ENCODE measurements at regions of chr12 and their contacts with region 1.

Region 1: GRCh38 chr12:96061864-96062453 is 26.6 kb upstream of the LTA4H start:
- DNase-seq: peak in 8 of 10 donors; percentile 23 to 92 (median 65)

Region 2: DNA sequence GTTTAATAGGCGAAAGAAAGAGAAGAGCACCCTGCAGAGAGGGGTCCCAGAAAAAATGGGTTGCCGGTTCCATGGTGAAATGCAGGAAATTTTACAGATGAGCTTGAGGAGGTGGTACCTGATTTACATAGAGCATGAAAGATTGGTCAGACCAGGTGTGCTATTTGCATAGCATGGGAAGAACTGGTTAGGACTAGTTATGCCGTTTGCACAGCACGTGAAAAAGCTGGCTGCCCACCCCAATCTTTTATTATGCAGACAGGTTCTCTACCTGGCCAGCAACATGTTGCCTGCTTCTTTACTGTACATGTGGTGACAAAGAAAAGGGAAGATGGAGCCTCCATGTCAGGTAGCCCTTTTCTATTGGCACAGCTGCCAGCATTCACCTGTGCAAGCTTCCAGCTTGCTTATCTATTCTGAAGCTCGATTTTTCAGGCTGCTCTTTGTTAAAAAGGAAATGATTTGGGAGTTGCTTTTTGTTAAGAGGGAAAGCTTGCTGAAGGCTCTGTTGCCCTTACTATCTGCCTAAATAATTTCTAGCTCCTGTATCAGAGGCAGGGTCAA is 69.3 kb after region 1 on chr12:
- intact Hi-C with region 1: loop called (anchors 2 kb)
- DNase-seq: no peak

Region 3: GRCh38 chr12:96219698-96220206 is 157.8 kb after region 1 on chr12:
- intact Hi-C with region 1: loop called (anchors 1 kb)
- DNase-seq: no peak

Region 4: DNA sequence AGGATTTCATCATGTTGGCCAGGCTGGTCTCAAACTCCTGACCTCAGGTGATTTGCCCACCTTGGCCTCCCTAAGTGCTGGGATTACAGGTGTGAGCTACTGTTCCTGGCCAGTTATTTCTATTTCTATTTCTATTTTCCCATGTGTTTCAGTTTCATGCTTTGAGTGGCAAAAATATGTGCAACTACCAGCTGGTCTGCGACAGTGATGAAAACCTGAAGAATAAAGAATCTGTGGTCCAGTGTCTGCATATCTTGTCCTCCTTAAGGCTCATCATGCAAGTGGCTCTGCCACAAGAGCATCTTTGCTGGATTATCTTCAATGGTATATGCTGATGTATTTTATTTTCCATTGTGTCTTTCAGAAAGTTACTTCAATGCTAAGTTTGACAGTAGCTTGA is 444.8 kb after region 1 on chr12:
- intact Hi-C with region 1: loop called (anchors 5 kb)
- DNase-seq: no peak

Region 5: GRCh38 chr12:96516472-96517430 is 454.8 kb after region 1 on chr12:
- intact Hi-C with region 1: loop called (anchors 1 kb)
- DNase-seq: peak; percentile 45 to 94 (median 76)

Measured in posterior cingulate gyrus (tissue), 11 donors.